Activated CD4-positive, alpha-beta memory T cell treated with anti-CD3 and anti-CD28 coated beads for 36 hours (primary cell): ENCODE measurements at regions of chr2 and their contacts with region 1.

Region 1: DNA sequence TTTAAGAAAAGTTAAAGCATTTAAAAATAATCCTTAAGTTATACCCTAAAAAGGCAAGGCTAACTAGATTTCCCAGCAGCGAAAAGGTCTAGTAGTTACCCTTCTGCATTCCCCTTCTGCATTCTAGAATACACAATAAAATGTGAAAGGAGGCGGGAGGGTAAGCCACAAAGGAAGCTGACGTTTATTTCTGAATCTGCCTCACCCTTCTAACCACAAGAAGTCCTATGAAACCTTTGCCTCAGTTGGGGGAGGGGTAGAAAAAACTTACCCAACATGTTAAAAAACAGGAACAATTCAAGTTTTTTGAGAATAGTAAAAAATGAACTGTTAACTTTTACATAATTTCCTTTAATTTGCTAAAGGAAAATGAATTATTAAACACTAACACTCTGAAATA is 11.3 kb downstream of the STK17B start:
- DNase-seq: peak; percentile 76
- H3K4me3 Mint-ChIP-seq: peak overlapping the region; percentile 39
- H3K27ac Mint-ChIP-seq: peak overlapping the region; percentile 96
- H3K4me1 Mint-ChIP-seq: peaks cover 77% of the 10 kb centered on the region
- H3K27me3 Mint-ChIP-seq: no peaks in the 10 kb centered on the region

Region 2: GRCh38 chr2:195697681-195698220 is 462.4 kb before region 1 on chr2:
- CTCF ChIA-PET with region 1: no interaction called
- POLR2A ChIA-PET with region 1: no interaction called
- intact Hi-C with region 1: no loop called
- DNase-seq: no peak
- H3K4me3 Mint-ChIP-seq: no peak overlapping the region
- H3K27ac Mint-ChIP-seq: no peak overlapping the region
- H3K4me1 Mint-ChIP-seq: peaks cover 26% of the 10 kb centered on the region
- H3K27me3 Mint-ChIP-seq: no peaks in the 10 kb centered on the region

Region 3: DNA sequence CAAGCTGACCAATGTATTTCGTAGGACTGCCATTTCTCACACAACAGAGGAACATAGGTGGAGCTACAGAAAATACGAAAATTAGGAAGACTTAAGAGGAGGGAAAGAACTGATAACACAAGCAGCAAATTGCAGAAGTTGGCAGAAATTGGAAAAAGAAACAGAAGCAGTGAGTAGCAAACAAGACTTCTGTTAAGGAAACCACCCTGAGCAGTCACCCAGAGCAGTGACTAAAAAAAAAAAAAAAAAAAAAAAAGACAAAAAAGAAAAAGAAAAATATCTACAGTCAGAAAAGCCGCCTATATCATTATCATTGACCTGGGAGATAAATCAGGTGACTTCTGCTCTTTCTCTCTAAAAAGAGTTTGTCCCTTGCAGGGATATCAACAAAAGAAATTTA is 10.2 kb before region 1 on chr2:
- CTCF ChIA-PET with region 1: interaction called, 3 read pairs
- POLR2A ChIA-PET with region 1: interaction called, 4 read pairs
- intact Hi-C with region 1: loop called (anchors 1 kb)
- DNase-seq: no peak
- H3K4me3 Mint-ChIP-seq: peak overlapping the region; percentile 29
- H3K27ac Mint-ChIP-seq: peak overlapping the region; percentile 72
- H3K4me1 Mint-ChIP-seq: peaks cover 82% of the 10 kb centered on the region
- H3K27me3 Mint-ChIP-seq: no peaks in the 10 kb centered on the region

Region 4: GRCh38 chr2:196182439-196183171 is 22.5 kb after region 1 on chr2:
- CTCF ChIA-PET with region 1: interaction called, 11 read pairs
- POLR2A ChIA-PET with region 1: interaction called, 10 read pairs
- intact Hi-C with region 1: loop called (anchors 2 kb)
- DNase-seq: no peak
- H3K4me3 Mint-ChIP-seq: peak overlapping the region; percentile 75
- H3K27ac Mint-ChIP-seq: peak overlapping the region; percentile 88
- H3K4me1 Mint-ChIP-seq: peaks cover 77% of the 10 kb centered on the region
- H3K27me3 Mint-ChIP-seq: no peaks in the 10 kb centered on the region

Region 5: GRCh38 chr2:196268538-196269338 is 108.6 kb after region 1 on chr2:
- CTCF ChIA-PET with region 1: no interaction called
- POLR2A ChIA-PET with region 1: interaction called, 3 read pairs
- intact Hi-C with region 1: loop called (anchors 2 kb)
- DNase-seq: peak; percentile 67
- H3K4me3 Mint-ChIP-seq: peak overlapping the region; percentile 25
- H3K27ac Mint-ChIP-seq: peak overlapping the region; percentile 45
- H3K4me1 Mint-ChIP-seq: peaks cover 62% of the 10 kb centered on the region
- H3K27me3 Mint-ChIP-seq: no peaks in the 10 kb centered on the region